Right ventricle myocardium superior (tissue), 1 donor: ENCODE measurements at regions of chr12 and their contacts with region 1.

Region 1: GRCh38 chr12:105053116-105053572 is 31.1 kb downstream of the ALDH1L2 start:
- DNase-seq: peak; percentile 74
- ATAC-seq: peak; percentile 82

Region 2: GRCh38 chr12:104376650-104377541 is 676.2 kb before region 1 on chr12:
- intact Hi-C with region 1: loop called (anchors 5 kb)
- DNase-seq: no peak
- ATAC-seq: no peak